ENCODE measurements at regions of chr12 and their contacts with region 1.

Region 1: GRCh38 chr12:105876396-105876927 is 262.3 kb downstream of the NUAK1 start:
- DNase-seq: no peak
- H3K4me3 Mint-ChIP-seq: no peak overlapping the region
- H3K27ac Mint-ChIP-seq: no peak overlapping the region
- H3K4me1 Mint-ChIP-seq: no peaks in the 10 kb centered on the region
- H3K27me3 Mint-ChIP-seq: peaks cover 10% of the 10 kb centered on the region
- CTCF ChIP-seq: no peak

Region 2: GRCh38 chr12:105590541-105590940 is 285.9 kb before region 1 on chr12:
- CTCF ChIA-PET with region 1: no interaction called
- intact Hi-C with region 1: no loop called
- DNase-seq: no peak
- H3K4me3 Mint-ChIP-seq: no peak overlapping the region
- H3K27ac Mint-ChIP-seq: no peak overlapping the region
- H3K4me1 Mint-ChIP-seq: no peaks in the 10 kb centered on the region
- H3K27me3 Mint-ChIP-seq: peaks cover 31% of the 10 kb centered on the region
- CTCF ChIP-seq: no peak

Region 3: GRCh38 chr12:105922670-105923102 is 46.2 kb after region 1 on chr12:
- CTCF ChIA-PET with region 1: interaction called, 11 read pairs
- intact Hi-C with region 1: no loop called
- DNase-seq: no peak
- H3K4me3 Mint-ChIP-seq: no peak overlapping the region
- H3K27ac Mint-ChIP-seq: no peak overlapping the region
- H3K4me1 Mint-ChIP-seq: no peaks in the 10 kb centered on the region
- H3K27me3 Mint-ChIP-seq: peaks cover 10% of the 10 kb centered on the region
- CTCF ChIP-seq: no peak

Region 4: GRCh38 chr12:106022568-106023012 is 146.1 kb after region 1 on chr12:
- CTCF ChIA-PET with region 1: no interaction called
- intact Hi-C with region 1: no loop called
- DNase-seq: peak; percentile 42
- H3K4me3 Mint-ChIP-seq: peak overlapping the region; percentile 42
- H3K27ac Mint-ChIP-seq: peak overlapping the region; percentile 89
- H3K4me1 Mint-ChIP-seq: peaks cover 47% of the 10 kb centered on the region
- H3K27me3 Mint-ChIP-seq: no peaks in the 10 kb centered on the region
- CTCF ChIP-seq: no peak

Measured in Calu3 (cell line).